MCF 10A (cell line): ENCODE measurements at regions of chrX and their contacts with region 1.

Region 1: DNA sequence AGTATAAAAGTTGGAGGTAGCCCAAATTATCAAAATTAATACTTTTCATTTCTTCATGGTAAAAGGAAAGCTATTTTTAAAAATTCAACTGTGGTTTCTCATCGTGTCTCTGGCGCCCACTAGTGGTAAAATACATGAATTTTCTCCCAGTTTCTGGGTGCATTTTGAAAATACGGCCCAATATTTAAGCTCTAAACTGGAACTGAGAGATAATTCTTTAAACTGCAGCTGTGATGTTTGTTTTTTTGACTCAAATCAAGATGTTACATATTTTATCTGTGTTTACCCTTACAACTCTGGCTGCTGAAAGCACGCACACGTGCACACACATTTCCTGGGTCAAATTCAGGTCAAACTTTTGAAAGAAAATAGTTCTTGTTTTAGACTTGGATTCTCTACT is 123.9 kb upstream of the ACSL4 start:
- DNase-seq: peak; percentile 60
- H3K4me3 Mint-ChIP-seq: no peak overlapping the region
- H3K27ac Mint-ChIP-seq: no peak overlapping the region
- H3K4me1 Mint-ChIP-seq: peaks cover 9% of the 10 kb centered on the region
- H3K27me3 Mint-ChIP-seq: peaks cover 26% of the 10 kb centered on the region
- CTCF ChIP-seq: peak; percentile 83

Region 2: DNA sequence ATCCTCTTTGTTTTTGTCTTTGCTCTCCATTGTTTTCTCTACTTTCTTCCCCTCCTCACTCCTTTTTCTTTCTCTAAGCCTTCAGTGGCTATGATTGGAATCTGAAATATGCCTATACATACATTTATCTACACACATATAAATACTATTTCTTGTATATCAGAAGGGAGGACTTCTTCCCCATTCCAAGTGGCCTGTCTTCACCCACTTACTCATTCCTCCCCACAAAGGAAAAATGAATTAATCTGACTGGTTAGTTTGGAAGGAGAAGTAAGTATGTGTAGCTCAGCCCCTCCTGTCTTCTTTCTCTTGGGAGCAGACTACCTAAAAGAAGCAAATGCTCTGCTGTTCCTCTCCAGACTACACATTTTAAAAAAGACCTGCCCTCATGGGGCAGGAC is 392.7 kb before region 1 on chrX:
- CTCF ChIA-PET with region 1: no interaction called
- POLR2A ChIA-PET with region 1: no interaction called
- intact Hi-C with region 1: no loop called
- DNase-seq: no peak
- H3K4me3 Mint-ChIP-seq: no peak overlapping the region
- H3K27ac Mint-ChIP-seq: no peak overlapping the region
- H3K4me1 Mint-ChIP-seq: no peaks in the 10 kb centered on the region
- H3K27me3 Mint-ChIP-seq: peaks cover 98% of the 10 kb centered on the region
- CTCF ChIP-seq: no peak

Region 3: GRCh38 chrX:109709129-109709631 is 147.8 kb before region 1 on chrX:
- CTCF ChIA-PET with region 1: interaction called, 108 read pairs
- POLR2A ChIA-PET with region 1: interaction called, 40 read pairs
- intact Hi-C with region 1: loop called (anchors 1 kb)
- DNase-seq: peak; percentile 58
- H3K4me3 Mint-ChIP-seq: no peak overlapping the region
- H3K27ac Mint-ChIP-seq: peak overlapping the region; percentile 42
- H3K4me1 Mint-ChIP-seq: peaks cover 10% of the 10 kb centered on the region
- H3K27me3 Mint-ChIP-seq: peaks cover 14% of the 10 kb centered on the region
- CTCF ChIP-seq: no peak

Region 4: GRCh38 chrX:109714340-109714958 is 142.5 kb before region 1 on chrX:
- CTCF ChIA-PET with region 1: interaction called, 108 read pairs
- POLR2A ChIA-PET with region 1: interaction called, 40 read pairs
- intact Hi-C with region 1: loop called (anchors 1 kb)
- DNase-seq: peak; percentile 61
- H3K4me3 Mint-ChIP-seq: no peak overlapping the region
- H3K27ac Mint-ChIP-seq: no peak overlapping the region
- H3K4me1 Mint-ChIP-seq: peaks cover 10% of the 10 kb centered on the region
- H3K27me3 Mint-ChIP-seq: no peaks in the 10 kb centered on the region
- CTCF ChIP-seq: no peak

Region 5: GRCh38 chrX:109872021-109872732 is 15.2 kb after region 1 on chrX:
- CTCF ChIA-PET with region 1: interaction called, 19 read pairs
- POLR2A ChIA-PET with region 1: interaction called, 4 read pairs
- intact Hi-C with region 1: no loop called
- DNase-seq: no peak
- H3K4me3 Mint-ChIP-seq: no peak overlapping the region
- H3K27ac Mint-ChIP-seq: no peak overlapping the region
- H3K4me1 Mint-ChIP-seq: no peaks in the 10 kb centered on the region
- H3K27me3 Mint-ChIP-seq: peaks cover 56% of the 10 kb centered on the region
- CTCF ChIP-seq: no peak